IMR-90 (cell line): ENCODE measurements at regions of chr7 and their contacts with region 1.

Region 1: GRCh38 chr7:66099616-66100474 is 14.8 kb upstream of the CRCP start:
- DNase-seq: peak; percentile 89
- ATAC-seq: peak; percentile 94
- H3K4me3 ChIP-seq: peak overlapping the region; percentile 43
- H3K27ac ChIP-seq: peak overlapping the region; percentile 79
- H3K4me1 ChIP-seq: peaks cover 6% of the 10 kb centered on the region
- H3K27me3 ChIP-seq: no peaks in the 10 kb centered on the region
- CTCF ChIP-seq: no peak
- POLR2A ChIP-seq: no peak
- RAD21 ChIP-seq: no peak

Region 2: GRCh38 chr7:65820287-65820950 is 279.4 kb before region 1 on chr7:
- CTCF ChIA-PET with region 1: no interaction called
- POLR2A ChIA-PET with region 1: no interaction called
- dilution Hi-C with region 1: no loop called
- in situ Hi-C with region 1: no loop called
- intact Hi-C with region 1: no loop called
- DNase-seq: no peak
- ATAC-seq: no peak
- H3K4me3 ChIP-seq: no peak overlapping the region
- H3K27ac ChIP-seq: no peak overlapping the region
- H3K4me1 ChIP-seq: no peaks in the 10 kb centered on the region
- H3K27me3 ChIP-seq: no peaks in the 10 kb centered on the region
- CTCF ChIP-seq: no peak
- POLR2A ChIP-seq: no peak
- RAD21 ChIP-seq: no peak

Region 3: DNA sequence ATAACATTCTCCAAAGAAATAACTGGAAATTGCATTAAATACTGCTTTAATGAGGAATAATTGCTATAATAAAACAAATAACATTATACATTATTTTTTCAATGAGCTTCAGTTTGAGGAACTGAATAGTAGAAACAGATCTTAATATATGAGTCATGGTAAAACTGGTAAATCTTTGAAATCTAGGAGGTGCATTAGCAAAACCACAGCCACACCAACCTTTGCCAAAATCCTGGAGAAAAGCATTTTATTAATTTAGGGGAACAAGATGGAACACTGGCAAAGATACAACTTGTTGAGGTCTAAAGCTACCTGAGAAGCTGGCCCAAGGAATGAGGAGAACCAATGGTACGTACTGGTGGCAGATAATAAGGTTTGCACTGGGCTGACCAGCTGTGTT is 29.6 kb before region 1 on chr7:
- CTCF ChIA-PET with region 1: no interaction called
- POLR2A ChIA-PET with region 1: interaction called, 12 read pairs
- dilution Hi-C with region 1: no loop called
- in situ Hi-C with region 1: no loop called
- intact Hi-C with region 1: no loop called
- DNase-seq: no peak
- ATAC-seq: no peak
- H3K4me3 ChIP-seq: no peak overlapping the region
- H3K27ac ChIP-seq: no peak overlapping the region
- H3K4me1 ChIP-seq: no peaks in the 10 kb centered on the region
- H3K27me3 ChIP-seq: no peaks in the 10 kb centered on the region
- CTCF ChIP-seq: no peak
- POLR2A ChIP-seq: no peak
- RAD21 ChIP-seq: no peak

Region 4: DNA sequence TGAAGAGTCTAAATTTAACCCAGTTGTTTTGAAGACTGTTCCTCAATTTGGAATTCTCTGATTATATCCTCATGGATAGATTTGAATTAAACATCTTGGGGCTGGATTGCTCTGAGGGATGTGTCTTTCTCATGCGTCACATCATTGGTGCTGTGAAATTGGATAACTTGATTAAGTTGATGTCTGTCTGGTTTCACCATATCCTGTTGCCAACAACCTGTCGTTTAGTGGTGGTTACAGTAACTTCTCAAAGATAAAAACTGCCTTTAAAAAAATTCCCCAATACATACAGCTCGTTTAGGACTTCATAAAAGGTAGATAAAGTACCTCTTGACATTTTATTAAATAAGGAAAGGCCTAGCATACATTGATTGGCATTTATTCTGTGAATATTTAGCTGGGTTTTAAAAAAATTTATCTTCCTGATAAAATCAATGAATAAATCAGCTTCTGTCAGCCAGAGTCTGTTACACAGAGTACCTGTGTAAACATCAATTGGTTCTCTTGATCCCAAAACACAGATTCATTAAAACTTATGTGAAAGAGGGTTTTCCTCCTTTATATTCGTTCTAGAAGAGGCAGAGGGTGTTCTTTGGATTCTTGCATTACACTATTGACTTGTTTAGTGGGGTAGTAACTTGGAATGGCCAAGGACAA is 25.3 kb after region 1 on chr7:
- CTCF ChIA-PET with region 1: no interaction called
- POLR2A ChIA-PET with region 1: interaction called, 13 read pairs
- dilution Hi-C with region 1: no loop called
- in situ Hi-C with region 1: no loop called
- intact Hi-C with region 1: no loop called
- DNase-seq: no peak
- ATAC-seq: no peak
- H3K4me3 ChIP-seq: no peak overlapping the region
- H3K27ac ChIP-seq: no peak overlapping the region
- H3K4me1 ChIP-seq: peaks cover 6% of the 10 kb centered on the region
- H3K27me3 ChIP-seq: no peaks in the 10 kb centered on the region
- CTCF ChIP-seq: no peak
- POLR2A ChIP-seq: no peak
- RAD21 ChIP-seq: no peak

Region 5: DNA sequence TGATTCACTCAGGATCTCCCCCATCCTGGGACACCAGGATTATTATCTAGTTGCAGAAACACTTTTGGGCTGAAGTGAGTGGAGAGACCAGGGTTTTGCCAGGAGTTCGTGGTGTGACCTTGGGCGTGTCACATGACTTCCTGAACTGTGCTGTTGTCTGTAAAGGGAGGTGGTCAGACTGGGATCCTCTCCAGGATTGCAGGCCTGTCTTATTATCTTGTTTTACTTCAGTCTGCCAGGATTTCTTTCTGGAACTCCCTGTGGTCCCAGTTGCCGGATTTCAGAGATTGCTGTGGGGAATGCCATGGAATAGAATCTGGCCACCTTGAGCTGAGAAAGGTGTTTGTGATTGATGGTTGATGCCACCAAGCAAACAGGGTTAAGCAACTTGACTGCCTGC is 50.6 kb after region 1 on chr7:
- CTCF ChIA-PET with region 1: no interaction called
- POLR2A ChIA-PET with region 1: no interaction called
- dilution Hi-C with region 1: no loop called
- in situ Hi-C with region 1: no loop called
- intact Hi-C with region 1: no loop called
- DNase-seq: peak; percentile 76
- ATAC-seq: peak; percentile 5; the same call in 1 of the 2 replicates
- H3K4me3 ChIP-seq: no peak overlapping the region
- H3K27ac ChIP-seq: peak overlapping the region; percentile 68; the same call in 1 of the 2 replicates
- H3K4me1 ChIP-seq: peaks cover 35% of the 10 kb centered on the region
- H3K27me3 ChIP-seq: no peaks in the 10 kb centered on the region
- CTCF ChIP-seq: no peak
- POLR2A ChIP-seq: no peak
- RAD21 ChIP-seq: no peak

Region 6: DNA sequence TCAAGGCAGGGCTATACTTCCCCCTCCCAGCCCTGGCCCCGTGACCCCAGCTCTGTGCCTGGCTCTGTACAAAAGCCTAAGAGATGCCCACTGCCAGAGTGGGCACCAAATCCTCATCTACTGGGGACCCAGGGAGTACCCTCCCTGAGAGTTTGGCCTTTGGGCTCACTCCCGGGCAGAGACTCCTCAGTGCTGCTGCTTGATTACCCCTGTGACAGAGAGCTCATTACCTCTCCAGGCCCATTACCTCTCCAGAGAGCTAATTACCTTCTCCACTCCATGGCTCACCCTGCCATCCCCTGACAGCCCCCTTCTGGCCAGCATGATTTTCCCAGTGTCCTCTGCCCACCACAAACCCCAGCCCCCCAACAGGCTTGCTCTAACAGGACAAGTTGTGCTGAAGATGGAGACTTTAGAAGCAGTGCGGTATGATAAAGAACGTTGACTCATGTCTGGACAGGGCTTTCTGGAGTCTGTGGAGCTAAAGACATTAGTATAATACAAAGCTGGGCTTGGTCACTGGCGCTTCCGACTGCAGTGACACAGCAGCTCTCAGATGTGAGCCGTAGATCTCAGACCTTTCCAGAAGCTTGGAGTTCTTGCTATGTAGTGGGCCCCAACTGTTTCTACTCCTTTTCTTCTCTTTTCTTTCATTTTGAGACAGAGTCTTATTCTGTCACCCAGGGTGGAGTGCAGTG is 417.5 kb after region 1 on chr7:
- CTCF ChIA-PET with region 1: no interaction called
- POLR2A ChIA-PET with region 1: no interaction called
- dilution Hi-C with region 1: no loop called
- in situ Hi-C with region 1: no loop called
- intact Hi-C with region 1: no loop called
- DNase-seq: no peak
- ATAC-seq: no peak
- H3K4me3 ChIP-seq: no peak overlapping the region
- H3K27ac ChIP-seq: no peak overlapping the region
- H3K4me1 ChIP-seq: no peaks in the 10 kb centered on the region
- H3K27me3 ChIP-seq: no peaks in the 10 kb centered on the region
- CTCF ChIP-seq: no peak
- POLR2A ChIP-seq: no peak
- RAD21 ChIP-seq: no peak